GM10248 (cell line): ENCODE measurements at regions of chr3 and their contacts with region 1.

Region 1: DNA sequence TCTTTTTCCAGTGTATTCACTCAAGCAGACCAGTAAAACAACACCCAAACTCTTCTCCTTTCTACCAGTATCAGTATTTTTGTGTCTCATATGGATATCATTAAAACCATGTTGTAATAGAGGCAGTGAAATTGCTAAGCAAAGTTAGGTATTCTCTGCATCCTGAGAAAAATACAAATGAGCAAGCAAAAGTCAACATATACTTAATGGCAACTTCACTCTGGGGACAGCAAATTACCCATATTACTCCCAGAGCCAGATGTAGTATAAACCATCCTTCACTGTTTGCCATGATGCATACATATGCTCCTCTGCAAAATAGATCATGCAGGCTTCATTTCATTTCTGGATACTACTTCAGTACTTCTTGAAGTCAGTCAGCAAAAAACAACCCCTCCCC is 22.1 kb downstream of the UBA5 start:
- DNase-seq: no peak
- CTCF ChIP-seq: no peak

Region 2: GRCh38 chr3:132606085-132606484 is 76.1 kb before region 1 on chr3:
- CTCF ChIA-PET with region 1: no interaction called
- POLR2A ChIA-PET with region 1: no interaction called
- DNase-seq: no peak
- CTCF ChIP-seq: no peak

Region 3: GRCh38 chr3:132669256-132669777 is 12.9 kb before region 1 on chr3:
- CTCF ChIA-PET with region 1: interaction called, 11 read pairs
- POLR2A ChIA-PET with region 1: no interaction called
- DNase-seq: no peak
- CTCF ChIP-seq: no peak

Region 4: GRCh38 chr3:132829101-132829500 is 146.9 kb after region 1 on chr3:
- CTCF ChIA-PET with region 1: no interaction called
- POLR2A ChIA-PET with region 1: no interaction called
- DNase-seq: no peak
- CTCF ChIP-seq: no peak

Region 5: GRCh38 chr3:133106169-133106568 is 424.0 kb after region 1 on chr3:
- CTCF ChIA-PET with region 1: no interaction called
- POLR2A ChIA-PET with region 1: no interaction called
- DNase-seq: no peak
- CTCF ChIP-seq: no peak